B cell (primary cell): ENCODE measurements at regions of chr12 and their contacts with region 1.

Region 1: GRCh38 chr12:868722-869121 is 80.8 kb downstream of the RAD52 start:
- DNase-seq: no peak
- ATAC-seq: no peak
- H3K4me3 ChIP-seq: no peak overlapping the region
- H3K4me3 Mint-ChIP-seq: no peak overlapping the region
- H3K27ac ChIP-seq: no peak overlapping the region
- H3K27ac Mint-ChIP-seq: no peak overlapping the region
- H3K4me1 ChIP-seq: no peaks in the 10 kb centered on the region
- H3K4me1 Mint-ChIP-seq: no peaks in the 10 kb centered on the region
- H3K27me3 ChIP-seq: no peaks in the 10 kb centered on the region
- H3K27me3 Mint-ChIP-seq: no peaks in the 10 kb centered on the region
- CTCF ChIP-seq: no peak

Region 2: DNA sequence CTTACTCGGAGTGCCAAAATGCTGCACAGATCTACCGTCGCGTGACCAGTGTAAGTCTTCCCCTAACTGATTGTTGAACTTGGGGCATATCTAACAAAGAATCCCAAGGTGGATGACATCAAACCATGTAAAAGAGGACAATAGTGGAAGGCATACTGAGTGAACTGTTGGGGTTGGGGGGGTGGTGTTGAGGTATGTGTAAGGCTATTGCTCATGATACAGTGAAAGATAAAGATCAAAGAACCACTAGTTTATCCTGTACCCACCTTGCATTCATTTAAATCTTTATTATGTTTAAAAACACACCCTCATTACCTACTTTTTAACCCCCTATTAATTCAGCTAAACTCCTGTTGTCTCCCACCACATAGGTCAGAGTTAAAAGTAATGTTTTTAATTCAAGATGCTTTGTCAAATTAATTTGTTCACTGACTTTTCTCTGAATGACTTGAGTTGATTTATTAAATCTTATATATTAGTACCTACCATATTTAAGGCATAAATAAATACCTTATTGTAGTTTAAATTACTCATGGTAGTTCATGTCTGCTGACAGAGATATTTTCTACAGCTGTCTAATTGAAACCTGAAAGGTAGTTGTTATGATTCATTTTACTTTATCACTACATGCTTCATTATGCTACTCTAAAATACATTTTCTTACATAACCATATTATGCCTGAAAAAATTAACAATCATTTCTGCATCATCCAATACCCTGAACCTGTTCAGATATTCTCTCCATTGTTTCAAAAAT is 38.4 kb before region 1 on chr12:
- CTCF ChIA-PET with region 1: no interaction called
- POLR2A ChIA-PET with region 1: no interaction called
- intact Hi-C with region 1: loop called (anchors 5 kb)
- DNase-seq: no peak
- ATAC-seq: no peak
- H3K4me3 ChIP-seq: no peak overlapping the region
- H3K4me3 Mint-ChIP-seq: no peak overlapping the region
- H3K27ac ChIP-seq: no peak overlapping the region
- H3K27ac Mint-ChIP-seq: no peak overlapping the region
- H3K4me1 ChIP-seq: no peaks in the 10 kb centered on the region
- H3K4me1 Mint-ChIP-seq: peaks cover 2% of the 10 kb centered on the region
- H3K27me3 ChIP-seq: no peaks in the 10 kb centered on the region
- H3K27me3 Mint-ChIP-seq: no peaks in the 10 kb centered on the region
- CTCF ChIP-seq: no peak

Region 3: GRCh38 chr12:907413-908185 is 38.9 kb after region 1 on chr12:
- CTCF ChIA-PET with region 1: no interaction called
- POLR2A ChIA-PET with region 1: no interaction called
- intact Hi-C with region 1: no loop called
- DNase-seq: no peak
- ATAC-seq: no peak
- H3K4me3 ChIP-seq: no peak overlapping the region
- H3K4me3 Mint-ChIP-seq: no peak overlapping the region
- H3K27ac ChIP-seq: no peak overlapping the region
- H3K27ac Mint-ChIP-seq: peak overlapping the region; percentile 59
- H3K4me1 ChIP-seq: peaks cover 0 to 8% of the 10 kb centered on the region in 2 donors
- H3K4me1 Mint-ChIP-seq: peaks cover 16% of the 10 kb centered on the region
- H3K27me3 ChIP-seq: no peaks in the 10 kb centered on the region
- H3K27me3 Mint-ChIP-seq: no peaks in the 10 kb centered on the region
- CTCF ChIP-seq: no peak